Ascending aorta (tissue), 2 donors: ENCODE measurements at regions of chr17 and their contacts with region 1.

Region 1: DNA sequence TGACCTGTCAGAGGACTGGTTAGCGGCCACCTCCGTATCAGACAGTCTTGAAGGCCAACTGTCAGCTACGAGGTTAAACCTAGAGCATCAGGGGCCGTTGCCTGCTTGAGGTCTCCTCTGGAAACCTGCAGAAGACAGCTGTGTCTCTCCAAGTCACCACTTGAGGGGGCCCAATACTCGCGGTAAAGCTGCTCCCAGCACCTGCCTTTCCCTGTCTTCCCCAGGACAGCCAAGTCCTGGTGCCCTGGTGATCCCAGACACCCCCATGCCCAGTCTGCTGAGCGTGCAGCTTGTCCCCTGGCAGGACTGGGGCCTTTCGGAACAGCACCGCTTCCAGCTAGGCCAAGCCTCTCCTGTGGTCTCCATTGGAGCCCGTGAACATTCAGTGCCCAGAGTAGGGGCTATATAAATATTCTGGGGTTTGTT is 80.1 kb downstream of the DNAH17 start:
- DNase-seq: peak; percentile 19 to 68
- H3K4me3 ChIP-seq: no peak overlapping the region
- H3K27ac ChIP-seq: no peak overlapping the region
- H3K4me1 ChIP-seq: no peaks in the 10 kb centered on the region
- H3K27me3 ChIP-seq: no peaks in the 10 kb centered on the region
- CTCF ChIP-seq: peak; percentile 56 to 71 (median 69)

Region 2: DNA sequence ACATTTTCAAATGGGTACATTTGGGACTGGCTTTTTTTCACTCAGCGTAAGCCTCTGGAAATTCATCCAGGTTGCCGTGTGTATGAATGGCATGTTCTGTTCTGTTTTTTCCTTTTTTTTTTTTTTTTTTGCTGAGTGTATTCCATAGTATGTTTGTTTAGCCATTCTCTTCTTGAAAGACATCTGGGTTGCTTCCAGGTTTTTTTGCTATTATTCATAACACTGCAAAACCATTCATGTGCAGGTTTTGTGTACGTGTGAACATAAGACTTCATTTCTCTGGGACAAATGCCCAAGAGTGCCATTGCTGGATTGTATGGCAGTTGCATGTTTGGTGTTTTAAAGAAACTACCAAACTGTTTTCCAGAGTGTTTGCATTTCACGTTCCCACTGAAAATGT is 874.5 kb before region 1 on chr17:
- intact Hi-C with region 1: no loop called
- DNase-seq: no peak
- H3K4me3 ChIP-seq: no peak overlapping the region
- H3K27ac ChIP-seq: no peak overlapping the region
- H3K4me1 ChIP-seq: no peaks in the 10 kb centered on the region
- H3K27me3 ChIP-seq: no peaks in the 10 kb centered on the region
- CTCF ChIP-seq: no peak

Region 3: DNA sequence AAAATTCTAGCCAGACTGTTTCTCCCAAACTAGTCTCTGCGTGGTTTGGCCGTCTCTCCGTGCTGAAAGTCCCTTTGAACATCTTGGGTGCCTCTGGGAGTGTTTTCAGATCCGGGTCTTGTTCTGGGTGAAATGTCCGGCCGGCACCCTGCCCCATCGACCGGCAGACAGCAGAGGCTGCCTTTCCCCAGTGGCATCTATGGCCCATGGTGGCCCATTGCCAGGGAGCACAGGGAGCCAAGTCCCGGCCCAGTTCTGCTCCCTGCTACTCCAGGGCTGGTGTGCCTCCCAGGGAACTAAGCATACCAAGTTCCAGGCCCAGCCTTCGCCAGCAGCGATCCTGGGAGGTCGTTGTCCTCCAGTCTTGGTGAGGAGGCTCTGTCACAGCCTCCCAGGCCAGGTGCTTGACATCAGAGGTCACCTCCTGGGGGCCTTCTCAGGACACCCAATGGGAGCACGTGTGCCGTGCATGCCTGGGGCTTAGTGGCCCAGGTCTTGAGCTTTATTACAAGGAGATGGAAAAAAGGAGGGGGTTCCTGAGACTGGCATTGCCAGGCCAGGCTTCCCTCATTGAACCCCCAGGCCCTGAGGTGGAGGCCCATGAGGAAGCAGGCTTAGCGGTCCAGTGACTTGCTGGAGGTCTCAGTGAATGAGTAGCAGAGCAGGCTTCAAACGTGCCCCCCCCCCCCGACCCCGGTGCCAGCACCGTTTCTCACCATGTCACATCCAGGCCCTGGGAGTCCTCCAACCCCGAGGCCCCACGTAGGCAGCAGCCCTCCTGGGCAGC is 64.7 kb before region 1 on chr17:
- intact Hi-C with region 1: no loop called
- DNase-seq: no peak
- H3K4me3 ChIP-seq: no peak overlapping the region
- H3K27ac ChIP-seq: no peak overlapping the region
- H3K4me1 ChIP-seq: no peaks in the 10 kb centered on the region
- H3K27me3 ChIP-seq: no peaks in the 10 kb centered on the region
- CTCF ChIP-seq: no peak

Region 4: DNA sequence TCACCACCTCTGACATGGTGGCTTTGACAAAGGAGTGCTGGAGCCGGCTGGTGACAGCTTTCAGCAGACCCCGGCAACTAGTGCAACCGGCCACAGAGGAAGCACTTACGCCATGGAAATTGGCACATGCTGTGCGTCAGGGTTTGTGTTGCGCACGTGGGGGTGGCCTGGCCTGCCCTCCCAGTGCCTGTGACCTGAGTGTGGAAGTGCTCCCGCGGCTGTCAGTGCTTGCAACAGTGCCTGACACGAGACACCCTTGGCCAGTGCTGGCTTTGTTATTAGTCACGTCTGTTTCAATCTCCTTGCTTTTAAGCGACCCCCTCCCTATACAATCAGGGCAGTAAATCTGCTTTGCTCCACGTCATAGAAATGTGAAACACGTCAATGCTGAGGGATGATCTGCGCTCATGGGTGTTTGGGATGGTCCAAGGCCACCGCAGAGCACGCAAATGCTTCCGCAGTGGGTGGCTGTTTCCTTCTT is 54.4 kb before region 1 on chr17:
- intact Hi-C with region 1: no loop called
- DNase-seq: peak; percentile 79 to 87
- H3K4me3 ChIP-seq: no peak overlapping the region
- H3K27ac ChIP-seq: no peak overlapping the region
- H3K4me1 ChIP-seq: no peaks in the 10 kb centered on the region
- H3K27me3 ChIP-seq: no peaks in the 10 kb centered on the region
- CTCF ChIP-seq: no peak

Region 5: GRCh38 chr17:78708510-78708973 is 211.4 kb after region 1 on chr17:
- intact Hi-C with region 1: loop called (anchors 1 kb)
- DNase-seq: peak in 1 of 2 donors; percentile 72
- H3K4me3 ChIP-seq: no peak overlapping the region
- H3K27ac ChIP-seq: no peak overlapping the region
- H3K4me1 ChIP-seq: peaks cover 0 to 2% of the 10 kb centered on the region in 2 donors
- H3K27me3 ChIP-seq: no peaks in the 10 kb centered on the region
- CTCF ChIP-seq: peak; percentile 56 to 83 (median 81)

Region 6: GRCh38 chr17:78745407-78746088 is 248.4 kb after region 1 on chr17:
- intact Hi-C with region 1: loop called (anchors 2 kb)
- DNase-seq: no peak
- H3K4me3 ChIP-seq: no peak overlapping the region
- H3K27ac ChIP-seq: no peak overlapping the region
- H3K4me1 ChIP-seq: peaks cover 0 to 2% of the 10 kb centered on the region in 2 donors
- H3K27me3 ChIP-seq: no peaks in the 10 kb centered on the region
- CTCF ChIP-seq: peak; percentile 44 to 63 (median 53)